Heart right ventricle (tissue), 16 donors: ENCODE measurements at regions of chr5 and their contacts with region 1.

Region 1: DNA sequence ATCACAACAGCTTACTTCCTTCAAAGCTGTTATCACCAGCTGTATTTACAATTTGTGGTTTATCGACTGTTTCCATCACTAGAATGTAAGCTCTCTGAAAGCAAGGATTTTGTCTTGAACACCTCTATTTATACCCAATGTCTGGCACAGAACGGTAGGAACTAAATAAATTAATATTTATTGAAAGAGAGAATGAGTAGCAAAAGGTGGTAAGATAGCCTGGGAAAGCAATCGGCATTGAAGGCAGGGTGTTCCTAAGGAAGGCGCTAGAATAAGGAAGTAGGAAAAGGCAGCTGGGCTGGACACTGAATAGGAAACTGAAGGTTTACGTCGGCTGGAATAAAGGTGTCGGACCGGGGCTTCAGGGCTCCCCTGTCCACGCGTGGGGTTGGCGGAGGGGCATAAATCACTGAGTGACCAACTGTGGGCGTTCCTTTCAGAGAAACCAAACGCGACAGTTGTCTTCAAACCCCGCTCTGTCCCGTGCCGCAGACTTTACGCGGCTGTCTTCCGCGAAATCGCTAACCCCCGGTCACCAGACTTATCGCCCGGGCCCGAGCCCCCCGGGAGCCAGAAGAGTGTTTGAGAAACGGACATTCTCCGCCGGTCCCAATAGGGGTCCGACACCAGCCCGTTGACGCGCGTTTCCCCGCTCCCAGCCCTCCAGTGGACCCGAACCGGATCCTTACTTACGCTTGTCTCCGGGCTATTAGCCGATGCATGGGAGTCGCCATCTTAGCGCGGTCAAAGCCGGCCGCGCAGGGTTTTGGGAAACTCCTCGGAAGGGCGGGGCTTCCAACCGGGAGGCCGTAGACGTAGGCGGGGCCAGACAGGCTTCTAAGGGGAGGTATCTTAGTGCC is at the start of gene ZCCHC10:
- DNase-seq: peak; percentile 92 to 94
- ATAC-seq: peak; percentile 98 to 100 (median 100)
- H3K4me3 ChIP-seq: peak within 1 kb of the TSS; percentile 59 to 99 (median 90)
- H3K27ac ChIP-seq: peak within 1 kb of the TSS; percentile 75 to 99 (median 94)
- H3K4me1 ChIP-seq: peaks cover 3 to 26% (median 20%) of the 10 kb centered on the region in 9 donors
- H3K27me3 ChIP-seq: no peaks in the 10 kb centered on the region
- CTCF ChIP-seq: no peak
- total RNA-seq, gene ZCCHC10: 12.2 to 22.4 (median 19.4) TPM

Region 2: GRCh38 chr5:131634996-131635754 is 1390.9 kb before region 1 on chr5 and contains the start of gene RAPGEF6:
- intact Hi-C with region 1: no loop called
- DNase-seq: peak; percentile 93 to 99
- ATAC-seq: peak; percentile 96 to 98 (median 98)
- H3K4me3 ChIP-seq: peak within 1 kb of the TSS; percentile 64 to 91 (median 75)
- H3K27ac ChIP-seq: peak within 1 kb of the TSS; percentile 94 to 100 (median 98)
- H3K4me1 ChIP-seq: peaks cover 4 to 53% (median 39%) of the 10 kb centered on the region in 9 donors
- H3K27me3 ChIP-seq: no peaks in the 10 kb centered on the region
- CTCF ChIP-seq: peak in 2 of 9 donors; percentile 2 to 4
- total RNA-seq, gene RAPGEF6: 8.5 to 16.3 (median 11.7) TPM

Region 3: DNA sequence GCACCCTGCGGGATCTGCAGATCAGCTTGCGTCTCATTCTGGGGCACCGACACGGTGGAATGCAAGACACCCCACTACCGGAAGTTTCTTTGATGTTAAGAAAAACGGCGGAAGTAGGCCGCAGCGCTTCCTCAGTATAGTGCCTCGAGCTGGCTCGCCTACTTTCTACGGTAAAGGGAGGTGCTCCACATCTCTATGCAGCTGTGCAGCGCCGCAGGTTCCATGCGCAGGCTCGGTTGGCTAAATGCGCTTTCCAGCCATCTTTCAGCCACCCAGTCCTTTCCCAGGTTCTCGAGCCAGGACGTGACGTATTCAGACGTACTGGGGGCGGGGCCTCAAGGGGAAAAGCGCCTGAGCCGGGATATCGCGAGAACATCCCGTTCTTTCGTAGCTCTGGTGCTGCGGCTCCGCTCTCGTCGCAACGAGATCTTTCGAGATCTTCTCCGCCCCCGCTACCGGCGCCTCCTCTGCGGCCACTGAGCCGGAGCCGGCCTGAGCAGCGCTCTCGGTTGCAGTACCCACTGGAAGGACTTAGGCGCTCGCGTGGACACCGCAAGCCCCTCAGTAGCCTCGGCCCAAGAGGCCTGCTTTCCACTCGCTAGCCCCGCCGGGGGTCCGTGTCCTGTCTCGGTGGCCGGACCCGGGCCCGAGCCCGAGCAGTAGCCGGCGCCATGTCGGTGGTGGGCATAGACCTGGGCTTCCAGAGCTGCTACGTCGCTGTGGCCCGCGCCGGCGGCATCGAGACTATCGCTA is 25.7 kb after region 1 on chr5 and contains the start of gene HSPA4:
- intact Hi-C with region 1: loop called in 1 of 10 experiments (anchors 2 kb)
- DNase-seq: peak; percentile 95 to 99
- ATAC-seq: peak; percentile 89 to 97 (median 94)
- H3K4me3 ChIP-seq: peak within 1 kb of the TSS; percentile 70 to 98 (median 90)
- H3K27ac ChIP-seq: peak within 1 kb of the TSS; percentile 86 to 99 (median 98)
- H3K4me1 ChIP-seq: peaks cover 6 to 65% (median 54%) of the 10 kb centered on the region in 9 donors
- H3K27me3 ChIP-seq: no peaks in the 10 kb centered on the region
- CTCF ChIP-seq: no peak
- total RNA-seq, gene HSPA4: 79.6 to 156 (median 111) TPM